ENCODE measurements at regions of chr10 and their contacts with region 1.

Region 1: GRCh38 chr10:100743626-100744135 is 1.7 kb upstream of the PAX2 start:
- DNase-seq: peak; percentile 82
- H3K4me3 Mint-ChIP-seq: no peak overlapping the region
- H3K27ac Mint-ChIP-seq: peak overlapping the region; percentile 41
- H3K4me1 Mint-ChIP-seq: peaks cover 16% of the 10 kb centered on the region
- H3K27me3 Mint-ChIP-seq: peaks cover 84% of the 10 kb centered on the region

Region 2: GRCh38 chr10:100297242-100297641 is 446.4 kb before region 1 on chr10:
- intact Hi-C with region 1: no loop called
- DNase-seq: no peak
- H3K4me3 Mint-ChIP-seq: no peak overlapping the region
- H3K27ac Mint-ChIP-seq: no peak overlapping the region
- H3K4me1 Mint-ChIP-seq: no peaks in the 10 kb centered on the region
- H3K27me3 Mint-ChIP-seq: peaks cover 36% of the 10 kb centered on the region

Region 3: DNA sequence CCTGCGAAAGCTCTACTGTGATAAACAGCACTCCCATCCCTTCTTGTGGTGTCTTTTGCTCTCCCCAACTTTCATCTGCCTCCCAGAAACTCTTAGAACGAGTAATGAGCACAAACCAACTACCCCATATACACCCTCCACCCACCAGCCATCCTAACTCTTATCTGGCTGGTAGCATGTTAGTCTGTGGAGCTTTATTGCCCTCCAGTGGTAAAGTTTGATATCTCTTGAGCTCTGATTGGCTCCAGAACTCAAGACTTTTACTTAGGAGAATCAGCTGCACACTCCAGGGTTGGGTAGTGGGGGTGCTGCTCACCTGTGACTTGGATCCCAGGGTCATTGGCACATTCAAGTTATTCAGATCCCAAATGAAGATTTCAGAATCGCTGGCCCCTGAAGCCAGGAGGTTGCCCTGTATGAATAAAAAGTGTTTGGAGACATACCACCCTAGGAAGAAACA is 235.0 kb before region 1 on chr10:
- intact Hi-C with region 1: no loop called
- DNase-seq: peak; percentile 90
- H3K4me3 Mint-ChIP-seq: peak overlapping the region; percentile 80
- H3K27ac Mint-ChIP-seq: peak overlapping the region; percentile 89
- H3K4me1 Mint-ChIP-seq: peaks cover 91% of the 10 kb centered on the region
- H3K27me3 Mint-ChIP-seq: no peaks in the 10 kb centered on the region

Region 4: GRCh38 chr10:100562008-100562711 is 181.5 kb before region 1 on chr10:
- intact Hi-C with region 1: loop called (anchors 1 kb)
- DNase-seq: peak; percentile 95
- H3K4me3 Mint-ChIP-seq: peak overlapping the region; percentile 36
- H3K27ac Mint-ChIP-seq: peak overlapping the region; percentile 3
- H3K4me1 Mint-ChIP-seq: peaks cover 12% of the 10 kb centered on the region
- H3K27me3 Mint-ChIP-seq: peaks cover 24% of the 10 kb centered on the region

Region 5: GRCh38 chr10:100670828-100671479 is 72.7 kb before region 1 on chr10:
- intact Hi-C with region 1: loop called (anchors 1 kb)
- DNase-seq: peak; percentile 93
- H3K4me3 Mint-ChIP-seq: peak overlapping the region; percentile 51
- H3K27ac Mint-ChIP-seq: no peak overlapping the region
- H3K4me1 Mint-ChIP-seq: peaks cover 5% of the 10 kb centered on the region
- H3K27me3 Mint-ChIP-seq: peaks cover 61% of the 10 kb centered on the region

Region 6: DNA sequence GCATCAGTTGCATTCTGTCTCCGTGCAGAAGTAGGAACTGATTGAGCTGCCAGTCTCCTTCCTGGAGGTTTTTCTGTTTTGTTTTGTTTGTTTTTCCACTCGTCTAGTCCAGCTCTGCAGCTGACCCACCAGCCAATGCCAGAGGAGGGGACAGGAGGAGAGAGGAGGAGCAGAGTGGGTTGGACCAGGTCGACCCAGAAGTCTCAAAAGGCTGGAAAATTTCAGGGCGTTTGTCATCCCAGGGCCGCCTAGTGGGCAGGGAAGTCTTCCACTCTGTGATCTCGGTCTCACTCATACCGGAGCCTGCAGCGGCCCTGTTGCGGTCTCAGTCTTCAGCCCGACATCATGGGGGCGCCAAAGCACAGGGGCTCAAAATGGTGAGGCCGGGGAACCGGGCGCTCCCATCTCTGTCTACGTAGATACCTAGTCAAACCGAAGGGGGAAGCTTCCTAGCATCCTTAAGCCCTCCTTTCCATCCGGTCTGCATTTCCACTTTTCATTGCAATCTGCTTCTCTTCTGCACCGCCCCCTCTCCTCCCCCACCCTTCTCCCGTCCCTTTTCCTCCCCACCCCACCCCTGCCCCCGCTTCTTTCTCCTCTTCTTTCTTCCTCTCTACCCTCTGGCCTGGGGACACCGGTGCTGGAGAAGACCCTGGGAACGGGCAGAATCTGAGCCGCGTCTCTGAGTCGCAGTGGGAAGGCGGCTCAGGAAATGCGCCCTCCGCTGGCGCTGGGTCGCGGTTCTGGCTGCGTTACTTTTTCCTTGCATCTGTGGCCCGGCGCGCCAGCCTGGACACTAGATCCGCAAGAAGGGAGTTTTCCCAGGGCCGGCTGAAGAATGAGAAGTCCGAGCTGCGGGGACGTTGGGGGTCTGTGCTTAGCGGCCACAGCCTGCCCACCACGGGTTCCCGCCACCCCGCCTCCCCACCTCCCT is 14.5 kb before region 1 on chr10:
- intact Hi-C with region 1: loop called (anchors 2 kb)
- DNase-seq: peak; percentile 65
- H3K4me3 Mint-ChIP-seq: peak overlapping the region; percentile 9
- H3K27ac Mint-ChIP-seq: no peak overlapping the region
- H3K4me1 Mint-ChIP-seq: peaks cover 20% of the 10 kb centered on the region
- H3K27me3 Mint-ChIP-seq: peaks cover 85% of the 10 kb centered on the region

Region 7: DNA sequence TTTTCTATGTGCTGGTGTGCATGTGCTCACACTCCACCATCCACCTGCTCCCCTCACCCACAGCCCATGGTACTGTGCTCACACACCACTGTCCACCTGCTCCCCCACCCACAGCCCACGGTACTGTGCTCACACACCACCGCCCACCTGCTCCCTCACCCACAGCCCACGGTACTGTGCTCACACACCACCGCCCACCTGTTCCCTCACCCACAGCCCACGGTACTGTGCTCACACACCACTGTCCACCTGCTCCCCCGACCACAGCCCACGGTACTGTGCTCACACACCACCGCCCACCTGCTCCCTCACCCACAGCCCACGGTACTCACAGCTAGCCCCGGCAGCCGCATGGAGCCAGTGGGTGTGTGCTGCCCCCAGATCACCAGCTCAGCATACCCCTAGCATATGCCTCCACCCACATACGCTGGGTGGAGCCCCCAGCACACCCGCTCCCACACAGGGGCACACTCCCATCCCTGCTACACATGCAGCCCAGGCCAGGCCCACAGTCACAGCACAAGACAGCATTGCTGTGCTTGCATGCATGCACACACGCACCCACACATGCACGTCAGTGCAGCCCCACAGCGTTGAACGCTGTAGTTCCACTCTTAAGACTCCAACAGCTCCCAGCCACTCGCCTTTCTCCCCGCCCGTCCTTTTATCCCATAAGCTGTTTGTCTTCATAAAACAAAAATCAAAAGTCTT is 63.7 kb after region 1 on chr10:
- intact Hi-C with region 1: no loop called
- DNase-seq: no peak
- H3K4me3 Mint-ChIP-seq: no peak overlapping the region
- H3K27ac Mint-ChIP-seq: no peak overlapping the region
- H3K4me1 Mint-ChIP-seq: peaks cover 4% of the 10 kb centered on the region
- H3K27me3 Mint-ChIP-seq: peaks cover 49% of the 10 kb centered on the region

Region 8: GRCh38 chr10:101141616-101142532 is 398.2 kb after region 1 on chr10:
- intact Hi-C with region 1: loop called (anchors 5 kb)
- DNase-seq: peak; percentile 94
- H3K4me3 Mint-ChIP-seq: no peak overlapping the region
- H3K27ac Mint-ChIP-seq: no peak overlapping the region
- H3K4me1 Mint-ChIP-seq: peaks cover 17% of the 10 kb centered on the region
- H3K27me3 Mint-ChIP-seq: peaks cover 89% of the 10 kb centered on the region